ENCODE measurements at regions of chr18 and their contacts with region 1.

Region 1: DNA sequence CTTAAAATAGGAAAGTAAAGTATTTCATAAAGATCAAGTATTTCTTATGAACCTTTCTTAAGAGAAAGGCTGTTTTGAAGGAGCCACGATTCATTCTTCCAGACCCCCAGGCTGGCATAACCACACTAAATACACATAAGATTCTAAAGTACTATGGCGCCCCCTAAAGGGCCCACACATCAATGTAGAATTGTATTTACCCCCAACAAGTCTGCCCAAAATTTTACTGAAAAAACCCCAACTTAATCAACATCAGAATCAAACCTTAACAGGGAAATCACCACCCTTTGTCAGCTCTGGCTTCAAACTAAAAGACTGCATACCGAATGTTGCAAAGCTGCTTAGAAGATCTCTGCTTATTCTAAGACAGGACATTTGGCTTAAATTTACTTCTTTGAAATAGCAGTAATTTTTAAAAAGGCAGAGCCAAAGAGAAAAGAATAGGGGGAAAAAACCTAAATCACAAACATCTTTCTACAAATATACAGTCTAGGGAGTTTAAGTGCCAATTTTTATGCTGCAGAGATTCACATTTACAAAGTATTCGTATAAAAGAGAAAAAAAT is 20.4 kb upstream of the BCL2 start:
- DNase-seq: peak in 1 of 2 experiments; percentile 62
- H3K4me3 ChIP-seq: peak overlapping the region in 1 of 4 experiments; percentile 41; a peak in 2 of 8 replicates
- H3K27ac ChIP-seq: no peak overlapping the region
- H3K4me1 ChIP-seq: peaks cover 0 to 7% (median 3%) of the 10 kb centered on the region in 4 experiments; a peak in 3 of 7 replicates
- H3K27me3 ChIP-seq: no peaks in the 10 kb centered on the region
- CTCF ChIP-seq: peak in 2 of 3 experiments; percentile 51 to 60; a peak in 3 of 4 replicates
- EP300 ChIP-seq: no peak
- POLR2A ChIP-seq: no peak
- RAD21 ChIP-seq: peak; percentile 67 to 72

Region 2: GRCh38 chr18:63329431-63330145 is 10.4 kb before region 1 on chr18:
- CTCF ChIA-PET with region 1: interaction called, 96 read pairs
- POLR2A ChIA-PET with region 1: interaction called, 3 read pairs
- DNase-seq: no peak
- H3K4me3 ChIP-seq: no peak overlapping the region
- H3K27ac ChIP-seq: no peak overlapping the region
- H3K4me1 ChIP-seq: no peaks in the 10 kb centered on the region
- H3K27me3 ChIP-seq: no peaks in the 10 kb centered on the region
- CTCF ChIP-seq: no peak
- EP300 ChIP-seq: no peak
- POLR2A ChIP-seq: no peak
- RAD21 ChIP-seq: no peak

Measured in H1 (cell line).